OCI-LY7 (cell line): ENCODE measurements at regions of chr6 and their contacts with region 1.

Region 1: GRCh38 chr6:18387061-18387721 is at the start of gene RNF144B:
- DNase-seq: peak; percentile 97
- H3K4me3 ChIP-seq: peak within 1 kb of the TSS; percentile 98
- H3K27ac ChIP-seq: peak within 1 kb of the TSS; percentile 75
- H3K4me1 ChIP-seq: peaks cover 59% of the 10 kb centered on the region
- CTCF ChIP-seq: no peak
- total RNA-seq, gene RNF144B: 83.4 and 87.9 TPM in 2 replicates

Region 2: DNA sequence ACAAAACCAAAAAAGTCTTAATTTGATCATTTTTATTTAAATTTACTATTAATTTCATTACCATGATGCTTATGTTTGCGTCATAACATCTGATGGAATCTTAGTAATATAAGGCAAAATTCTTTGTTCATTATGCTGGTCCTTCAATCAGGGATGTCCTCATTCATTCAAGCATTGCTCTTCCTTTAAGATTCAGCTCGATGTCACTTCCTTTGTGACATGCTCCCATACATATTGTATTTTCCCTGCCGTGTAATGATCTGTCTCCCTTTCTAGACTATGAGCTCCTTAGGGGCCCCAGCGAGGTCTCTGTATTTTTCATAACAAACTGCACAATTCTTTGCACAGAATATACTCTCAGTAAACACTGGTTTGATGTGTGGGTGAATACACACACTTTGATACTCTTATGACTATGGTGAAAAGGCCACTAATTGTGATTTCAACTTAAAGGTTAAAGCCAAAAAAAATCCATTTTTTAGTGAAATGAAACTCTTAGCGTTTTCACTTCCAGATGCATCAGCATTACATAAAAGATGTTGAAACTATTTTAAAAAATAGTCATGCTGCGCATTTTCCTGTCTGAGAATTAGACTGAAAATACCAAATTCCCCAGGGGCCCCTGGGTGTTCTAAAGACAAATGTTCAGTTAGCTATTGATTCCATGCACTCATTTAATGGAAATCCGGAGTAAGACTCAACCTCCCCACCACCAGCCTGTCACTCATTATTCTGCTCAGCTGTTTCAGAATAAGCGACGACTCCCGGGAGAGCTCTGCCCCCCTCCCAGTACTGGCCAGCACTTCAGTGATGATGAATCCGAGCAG is 1795.6 kb before region 1 on chr6:
- CTCF ChIA-PET with region 1: no interaction called
- POLR2A ChIA-PET with region 1: no interaction called
- intact Hi-C with region 1: no loop called
- DNase-seq: peak; percentile 10
- H3K4me3 ChIP-seq: no peak overlapping the region
- H3K27ac ChIP-seq: no peak overlapping the region
- H3K4me1 ChIP-seq: no peaks in the 10 kb centered on the region
- CTCF ChIP-seq: no peak

Region 3: DNA sequence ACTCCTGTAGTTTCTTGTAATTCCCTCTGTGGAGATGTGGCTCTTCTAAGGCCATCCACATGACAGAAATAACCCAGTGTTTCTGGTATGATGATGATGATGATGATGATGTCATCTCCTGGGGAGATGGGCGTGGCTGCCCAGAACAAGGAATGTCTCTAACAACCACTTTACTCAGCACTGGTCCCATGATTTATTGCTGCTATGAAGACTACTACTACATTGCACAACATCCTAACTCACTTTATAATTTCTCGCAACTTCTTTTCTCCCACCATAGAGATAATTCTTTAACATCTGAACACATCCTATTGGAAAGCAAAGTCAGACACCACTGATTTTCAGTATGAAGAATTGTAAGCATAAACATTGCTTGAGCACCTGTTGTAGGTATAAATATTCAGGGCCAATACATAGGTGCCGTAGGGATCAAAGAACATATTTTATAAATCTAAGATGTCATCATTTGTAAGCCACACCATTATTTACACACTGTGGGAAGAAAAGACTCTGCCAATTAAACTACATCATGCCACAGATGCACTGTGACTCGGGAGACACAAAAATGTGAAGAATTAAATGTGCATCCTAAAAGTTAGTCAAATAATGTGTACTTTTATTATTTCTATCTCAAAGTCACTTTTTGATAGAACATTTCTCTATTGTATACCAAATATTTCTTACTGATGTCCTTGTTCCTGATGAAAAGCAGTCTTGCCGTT is 238.7 kb before region 1 on chr6:
- CTCF ChIA-PET with region 1: no interaction called
- POLR2A ChIA-PET with region 1: no interaction called
- intact Hi-C with region 1: no loop called
- DNase-seq: no peak
- H3K4me3 ChIP-seq: no peak overlapping the region
- H3K27ac ChIP-seq: no peak overlapping the region
- H3K4me1 ChIP-seq: peaks cover 7% of the 10 kb centered on the region
- CTCF ChIP-seq: no peak

Region 4: DNA sequence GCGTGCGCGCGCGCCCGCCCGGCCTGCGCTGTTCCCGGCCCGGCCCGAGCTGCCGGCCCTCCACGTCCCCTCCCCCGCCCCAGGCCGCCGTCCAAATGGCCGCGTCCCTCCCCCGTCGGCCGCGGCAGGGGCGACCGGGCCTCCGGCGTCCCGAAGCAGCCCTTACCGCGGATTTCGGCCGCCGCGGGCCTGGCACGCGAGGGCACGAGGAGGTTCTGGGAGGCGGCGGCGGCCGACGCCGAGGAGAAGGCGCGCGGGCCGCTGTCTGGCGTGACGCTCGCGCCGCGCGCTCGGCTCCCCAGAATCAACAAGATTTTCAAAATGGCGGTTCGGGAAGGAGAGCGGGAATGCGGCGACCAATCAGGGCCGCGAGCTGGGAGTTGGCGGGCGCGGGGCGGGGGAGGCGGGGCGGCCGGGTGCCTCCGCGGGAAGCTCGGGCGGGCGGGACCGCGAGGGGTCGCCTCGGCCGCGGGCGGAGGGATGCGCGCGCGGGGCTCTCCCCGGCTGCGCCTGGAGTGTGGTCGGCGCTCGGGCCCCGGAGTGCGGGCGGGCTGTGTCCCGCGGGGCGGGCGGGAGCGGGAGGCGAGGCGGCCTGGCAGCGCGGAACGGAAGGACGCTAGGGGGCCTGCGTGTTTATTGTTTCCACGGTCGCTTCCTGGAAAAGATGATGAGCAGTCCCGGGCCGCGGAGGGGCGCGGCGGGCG is 122.8 kb before region 1 on chr6 and contains the start of gene DEK:
- CTCF ChIA-PET with region 1: no interaction called
- POLR2A ChIA-PET with region 1: interaction called, 3 read pairs
- intact Hi-C with region 1: loop called (anchors 2 kb)
- DNase-seq: peak; percentile 86
- H3K4me3 ChIP-seq: peak within 1 kb of the TSS; percentile 90
- H3K27ac ChIP-seq: peak within 1 kb of the TSS; percentile 91
- H3K4me1 ChIP-seq: peaks cover 44% of the 10 kb centered on the region
- CTCF ChIP-seq: peak; percentile 73
- total RNA-seq, gene DEK: 235 and 462 TPM in 2 replicates

Region 5: DNA sequence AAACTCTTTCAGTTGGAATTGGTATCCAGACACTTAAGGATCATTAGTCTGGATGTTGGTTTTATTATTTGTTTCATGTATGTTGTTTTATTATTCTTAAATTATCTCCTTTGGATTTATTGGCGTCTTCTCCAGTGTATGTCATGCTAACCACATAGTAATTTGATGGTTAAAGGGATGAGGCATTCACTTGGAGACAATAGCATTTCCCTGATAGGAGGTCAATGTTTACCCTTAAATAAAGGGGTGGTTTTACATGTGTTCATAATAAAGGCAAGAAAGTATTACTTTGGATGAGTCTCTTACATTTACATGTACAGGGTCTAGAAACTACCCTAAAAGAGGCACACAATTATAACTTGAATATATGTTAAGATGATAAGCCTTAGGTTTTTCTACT is 51.2 kb before region 1 on chr6:
- CTCF ChIA-PET with region 1: no interaction called
- POLR2A ChIA-PET with region 1: interaction called, 128 read pairs
- intact Hi-C with region 1: no loop called
- DNase-seq: no peak
- H3K4me3 ChIP-seq: no peak overlapping the region
- H3K27ac ChIP-seq: peak overlapping the region; percentile 1
- H3K4me1 ChIP-seq: peaks cover 52% of the 10 kb centered on the region
- CTCF ChIP-seq: no peak

Region 6: DNA sequence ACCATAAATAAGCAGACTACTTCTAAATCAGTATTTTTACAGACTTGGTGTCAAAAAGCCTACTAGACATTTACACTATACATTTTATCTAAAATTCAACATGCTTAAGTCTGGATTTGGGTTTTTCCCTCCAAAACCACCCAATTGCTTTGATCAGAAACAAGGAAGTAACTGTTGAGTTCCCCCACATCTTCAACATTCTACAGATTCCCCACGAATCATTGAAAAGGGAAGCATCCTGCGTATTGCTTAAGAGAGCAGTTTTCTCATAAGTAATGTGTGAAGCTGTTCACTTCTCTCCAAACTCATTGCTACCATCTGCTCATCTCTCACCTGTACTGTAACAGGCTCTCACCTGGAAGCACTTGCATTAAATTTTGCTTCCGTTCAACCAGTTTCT is 36.5 kb before region 1 on chr6:
- CTCF ChIA-PET with region 1: no interaction called
- POLR2A ChIA-PET with region 1: interaction called, 31 read pairs
- intact Hi-C with region 1: no loop called
- DNase-seq: no peak
- H3K4me3 ChIP-seq: no peak overlapping the region
- H3K27ac ChIP-seq: no peak overlapping the region
- H3K4me1 ChIP-seq: peaks cover 46% of the 10 kb centered on the region
- CTCF ChIP-seq: no peak

Region 7: DNA sequence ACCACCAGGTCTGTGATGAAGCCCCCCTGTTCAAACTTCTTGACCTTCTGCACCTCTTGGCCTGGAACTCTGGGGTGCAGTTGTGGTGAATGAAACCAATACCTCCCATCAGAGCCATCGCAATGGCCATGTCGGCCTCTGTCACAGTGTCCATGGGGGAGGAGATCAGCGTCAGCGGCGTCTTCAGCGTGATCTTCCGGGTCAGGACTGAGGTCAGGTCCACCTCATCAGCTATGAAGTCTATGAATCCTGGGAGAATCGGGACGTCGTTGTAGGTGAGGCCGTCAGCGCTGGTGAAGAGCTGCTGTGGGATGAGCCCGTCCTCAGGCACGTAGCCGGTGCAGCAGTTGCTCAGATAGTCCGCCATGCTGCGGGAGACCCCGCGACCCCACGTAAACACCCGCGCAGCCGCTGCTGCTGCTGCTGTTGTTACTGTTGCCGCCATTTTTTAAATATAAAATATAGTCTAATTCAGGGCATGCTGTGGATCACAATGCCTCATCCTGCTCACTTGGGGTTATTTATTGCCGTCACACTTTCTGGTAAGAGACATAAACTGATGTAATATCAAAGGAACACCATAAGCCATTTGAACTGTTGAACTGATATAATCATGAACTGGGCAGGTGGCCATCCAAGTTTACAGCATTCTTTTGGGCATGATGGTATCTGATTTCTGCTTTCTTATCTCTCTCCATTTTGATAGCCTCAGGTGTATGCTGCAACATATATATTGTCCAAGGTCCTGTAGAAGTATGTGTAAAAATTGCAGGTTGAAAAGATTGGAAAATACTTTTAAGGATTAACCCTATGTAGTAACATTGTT is 18.7 kb before region 1 on chr6:
- CTCF ChIA-PET with region 1: interaction called, 4 read pairs
- POLR2A ChIA-PET with region 1: interaction called, 34 read pairs
- intact Hi-C with region 1: no loop called
- DNase-seq: no peak
- H3K4me3 ChIP-seq: no peak overlapping the region
- H3K27ac ChIP-seq: no peak overlapping the region
- H3K4me1 ChIP-seq: peaks cover 13% of the 10 kb centered on the region
- CTCF ChIP-seq: no peak

Region 8: DNA sequence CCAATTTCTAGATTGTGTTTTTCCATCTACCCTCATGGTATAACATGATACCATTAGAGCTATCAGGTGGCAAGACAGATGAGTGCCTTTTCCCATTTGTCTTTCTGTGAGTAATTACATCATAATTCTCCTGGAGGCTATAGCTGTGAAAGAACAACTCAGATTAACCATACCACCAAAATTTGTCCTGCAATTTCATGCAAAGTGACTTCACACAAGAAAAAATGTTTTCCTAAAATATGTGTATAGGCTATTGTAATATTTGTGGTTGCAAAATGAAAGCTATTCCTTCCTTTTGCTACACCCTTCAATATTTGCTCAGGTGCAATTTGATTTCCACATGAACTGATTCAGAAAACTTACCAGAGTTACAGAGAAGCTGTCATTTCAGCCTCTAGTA is 902.3 kb after region 1 on chr6:
- CTCF ChIA-PET with region 1: no interaction called
- POLR2A ChIA-PET with region 1: no interaction called
- intact Hi-C with region 1: no loop called
- DNase-seq: no peak
- H3K4me3 ChIP-seq: no peak overlapping the region
- H3K27ac ChIP-seq: no peak overlapping the region
- H3K4me1 ChIP-seq: no peaks in the 10 kb centered on the region
- CTCF ChIP-seq: no peak